PC-9 (cell line): ENCODE measurements at regions of chr9 and their contacts with region 1.

Region 1: GRCh38 chr9:104863180-104863883 is 64.6 kb downstream of the ABCA1 start:
- DNase-seq: peak; percentile 56
- H3K4me3 ChIP-seq: no peak overlapping the region
- H3K27ac ChIP-seq: peak overlapping the region; percentile 21; the same call in 1 of the 2 replicates
- H3K4me1 ChIP-seq: peaks cover 50% of the 10 kb centered on the region
- H3K27me3 ChIP-seq: no peaks in the 10 kb centered on the region
- CTCF ChIP-seq: peak; percentile 84

Region 2: DNA sequence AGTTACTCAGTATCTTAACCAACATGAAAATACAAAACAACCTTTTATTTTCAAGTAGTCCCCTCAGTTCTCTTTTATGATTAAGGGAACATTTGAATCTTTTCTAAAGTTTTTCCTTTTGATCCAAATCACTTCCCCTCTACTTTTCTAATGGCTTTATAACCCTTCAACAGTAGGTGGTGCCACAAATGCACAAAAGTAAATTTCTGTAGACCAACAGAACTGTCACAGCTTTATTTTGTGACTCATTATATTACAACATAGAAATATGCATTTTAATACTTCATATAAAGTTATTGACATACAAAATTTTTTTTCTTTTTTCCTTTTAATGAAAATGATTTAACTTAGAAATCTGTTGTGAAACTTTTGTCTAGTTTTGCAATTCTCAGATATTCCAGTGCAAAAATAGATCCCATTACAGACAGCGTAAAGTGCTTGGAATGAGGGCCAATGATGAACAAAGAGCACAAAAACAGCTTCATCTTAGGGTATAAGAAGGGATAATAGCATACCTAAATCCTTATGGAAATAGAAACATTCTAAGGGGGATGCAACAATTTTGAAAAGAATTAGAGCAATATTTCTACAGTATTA is 82.4 kb before region 1 on chr9:
- CTCF ChIA-PET with region 1: no interaction called
- POLR2A ChIA-PET with region 1: no interaction called
- intact Hi-C with region 1: loop called (anchors 2 kb)
- DNase-seq: peak in 1 of 2 experiments; percentile 43
- H3K4me3 ChIP-seq: no peak overlapping the region
- H3K27ac ChIP-seq: no peak overlapping the region
- H3K4me1 ChIP-seq: no peaks in the 10 kb centered on the region
- H3K27me3 ChIP-seq: no peaks in the 10 kb centered on the region
- CTCF ChIP-seq: peak; percentile 66

Region 3: GRCh38 chr9:104808035-104808614 is 55.2 kb before region 1 on chr9:
- CTCF ChIA-PET with region 1: no interaction called
- POLR2A ChIA-PET with region 1: no interaction called
- intact Hi-C with region 1: no loop called
- DNase-seq: peak in 1 of 2 experiments; percentile 19
- H3K4me3 ChIP-seq: no peak overlapping the region
- H3K27ac ChIP-seq: no peak overlapping the region
- H3K4me1 ChIP-seq: peaks cover 24% of the 10 kb centered on the region
- H3K27me3 ChIP-seq: no peaks in the 10 kb centered on the region
- CTCF ChIP-seq: no peak

Region 4: DNA sequence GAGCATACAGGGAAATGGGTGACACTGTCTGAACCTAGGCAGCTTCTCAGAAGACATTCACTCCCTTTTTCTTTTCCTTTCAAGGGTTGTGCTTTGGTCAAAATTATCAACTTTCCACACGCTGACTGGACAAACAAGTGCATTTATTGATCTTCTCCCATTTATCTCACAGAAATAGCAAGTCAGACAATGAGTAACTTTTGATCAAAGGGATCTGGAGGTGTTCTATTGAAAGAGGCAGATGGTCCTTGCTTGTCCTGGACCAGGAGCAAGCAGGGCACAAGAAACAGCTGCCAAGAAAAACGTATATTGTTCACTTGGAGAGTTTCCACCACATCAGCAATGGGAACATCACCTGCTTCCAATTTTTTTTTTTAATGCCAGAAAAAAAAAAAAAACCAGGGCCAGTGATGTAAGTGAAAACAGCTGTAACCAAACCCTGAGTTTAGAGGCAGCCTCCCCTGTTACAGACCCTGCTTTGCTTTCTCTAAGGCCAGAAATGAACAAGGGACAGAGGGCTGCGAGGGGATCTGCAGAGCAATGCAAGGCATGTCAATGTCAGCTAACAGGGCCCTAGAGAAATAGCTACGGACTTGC is 19.6 kb before region 1 on chr9:
- CTCF ChIA-PET with region 1: no interaction called
- POLR2A ChIA-PET with region 1: no interaction called
- intact Hi-C with region 1: no loop called
- DNase-seq: no peak
- H3K4me3 ChIP-seq: no peak overlapping the region
- H3K27ac ChIP-seq: no peak overlapping the region
- H3K4me1 ChIP-seq: no peaks in the 10 kb centered on the region
- H3K27me3 ChIP-seq: no peaks in the 10 kb centered on the region
- CTCF ChIP-seq: no peak

Region 5: GRCh38 chr9:104968025-104968982 is 105.0 kb after region 1 on chr9:
- CTCF ChIA-PET with region 1: interaction called, 3 read pairs
- POLR2A ChIA-PET with region 1: no interaction called
- intact Hi-C with region 1: loop called (anchors 10 kb)
- DNase-seq: peak; percentile 74 to 91
- H3K4me3 ChIP-seq: peak overlapping the region; percentile 99
- H3K27ac ChIP-seq: peak overlapping the region; percentile 85
- H3K4me1 ChIP-seq: peaks cover 26% of the 10 kb centered on the region
- H3K27me3 ChIP-seq: no peaks in the 10 kb centered on the region
- CTCF ChIP-seq: no peak

Region 6: DNA sequence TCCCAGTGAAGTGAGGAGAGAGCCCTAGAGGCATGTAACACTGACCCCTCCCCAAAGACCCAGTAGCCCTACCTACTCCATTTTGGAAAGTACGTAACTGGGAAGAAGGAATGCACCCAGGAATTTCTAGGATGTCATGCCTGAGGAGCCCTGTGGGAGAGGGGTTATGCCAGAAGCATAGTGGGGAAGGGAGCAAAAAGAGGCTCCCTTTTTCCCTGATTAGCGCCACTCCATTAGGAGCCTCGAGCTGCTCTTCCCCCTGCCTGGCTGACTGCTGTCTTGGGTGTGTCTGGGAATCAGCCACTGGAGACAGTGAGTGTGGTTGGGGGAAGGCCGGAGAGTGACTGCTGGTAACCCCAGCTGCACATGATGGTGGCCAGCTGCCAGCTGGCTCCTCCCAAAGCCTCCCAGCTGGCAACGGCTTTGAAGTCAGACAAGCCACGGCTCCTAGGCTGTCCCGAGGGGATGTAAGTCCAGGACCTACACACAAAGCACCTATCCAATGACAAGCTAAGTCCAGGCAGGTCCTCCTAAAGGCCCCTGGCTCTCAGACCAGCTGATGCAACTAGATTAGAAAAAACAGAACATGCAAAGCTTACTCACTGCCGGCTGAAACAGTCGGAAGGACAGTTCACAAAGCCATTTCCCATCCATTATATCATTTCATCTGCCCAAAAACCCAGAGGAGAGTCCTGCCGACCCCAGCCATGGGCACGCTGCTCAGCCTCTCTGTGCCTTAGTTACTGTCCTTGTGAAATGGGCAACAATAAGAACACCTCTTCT is 201.2 kb after region 1 on chr9:
- CTCF ChIA-PET with region 1: no interaction called
- POLR2A ChIA-PET with region 1: no interaction called
- intact Hi-C with region 1: loop called (anchors 5 kb)
- DNase-seq: peak; percentile 93 to 94
- H3K4me3 ChIP-seq: peak overlapping the region; percentile 36; the same call in 1 of the 2 replicates
- H3K27ac ChIP-seq: peak overlapping the region; percentile 97
- H3K4me1 ChIP-seq: peaks cover 43% of the 10 kb centered on the region
- H3K27me3 ChIP-seq: no peaks in the 10 kb centered on the region
- CTCF ChIP-seq: no peak

Region 7: DNA sequence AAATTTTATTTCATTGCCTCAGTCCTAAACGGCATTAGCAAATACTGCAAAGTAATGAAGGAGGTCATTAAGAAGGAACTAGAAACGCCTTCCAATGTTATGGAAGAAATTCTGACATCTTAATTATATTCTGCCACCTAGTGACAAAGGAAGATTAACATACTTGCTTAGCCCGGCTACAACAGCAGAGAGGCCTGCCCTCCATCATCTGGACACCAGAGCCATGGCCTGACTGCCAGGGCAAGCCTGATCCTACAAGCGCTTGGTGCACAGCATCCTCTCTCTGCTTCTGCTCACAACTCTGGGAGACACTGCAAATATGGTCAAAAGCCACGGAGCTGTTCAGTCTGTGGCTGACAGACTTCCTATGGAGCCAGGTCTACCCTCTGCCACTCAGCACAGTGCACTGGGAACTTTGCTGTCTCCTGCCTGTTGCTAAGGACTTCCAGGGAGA is 293.8 kb after region 1 on chr9:
- CTCF ChIA-PET with region 1: no interaction called
- POLR2A ChIA-PET with region 1: no interaction called
- intact Hi-C with region 1: loop called (anchors 1 kb)
- DNase-seq: peak; percentile 52 to 71
- H3K4me3 ChIP-seq: no peak overlapping the region
- H3K27ac ChIP-seq: no peak overlapping the region
- H3K4me1 ChIP-seq: peaks cover 24% of the 10 kb centered on the region
- H3K27me3 ChIP-seq: no peaks in the 10 kb centered on the region
- CTCF ChIP-seq: peak; percentile 71

Region 8: GRCh38 chr9:105414947-105415661 is 551.8 kb after region 1 on chr9:
- CTCF ChIA-PET with region 1: no interaction called
- POLR2A ChIA-PET with region 1: no interaction called
- intact Hi-C with region 1: loop called (anchors 1 kb)
- DNase-seq: peak in 1 of 2 experiments; percentile 45
- H3K4me3 ChIP-seq: no peak overlapping the region
- H3K27ac ChIP-seq: no peak overlapping the region
- H3K4me1 ChIP-seq: 0 out of 2 replicates have a peak, but pooled peaks cover 3% of the 10 kb centered on the region
- H3K27me3 ChIP-seq: no peaks in the 10 kb centered on the region
- CTCF ChIP-seq: peak; percentile 98

Region 9: GRCh38 chr9:105694190-105694847 is 831.0 kb after region 1 on chr9 and contains the start of gene TMEM38B:
- CTCF ChIA-PET with region 1: interaction called, 10 read pairs
- POLR2A ChIA-PET with region 1: no interaction called
- intact Hi-C with region 1: no loop called
- DNase-seq: peak; percentile 53 to 86
- H3K4me3 ChIP-seq: peak within 1 kb of the TSS; percentile 87
- H3K27ac ChIP-seq: no peak within 1 kb of the TSS
- H3K4me1 ChIP-seq: peaks cover 15% of the 10 kb centered on the region
- H3K27me3 ChIP-seq: no peaks in the 10 kb centered on the region
- CTCF ChIP-seq: no peak
- total RNA-seq, gene TMEM38B: 19.0 and 19.5 TPM in 2 replicates